Common myeloid progenitor, CD34-positive (primary cell): ENCODE measurements at regions of chr16 and their contacts with region 1.

Region 1: GRCh38 chr16:17578921-17579874 is 108.4 kb upstream of the XYLT1 start:
- DNase-seq: peak; percentile 80 to 87 (median 83)
- H3K4me3 ChIP-seq: peak overlapping the region in 3 of 7 experiments; percentile 5 to 42 (median 41)
- H3K27ac ChIP-seq: no peak overlapping the region
- H3K4me1 ChIP-seq: peaks cover 0 to 11% (median 3%) of the 10 kb centered on the region in 4 experiments
- H3K27me3 ChIP-seq: no peaks in the 10 kb centered on the region

Region 2: GRCh38 chr16:17556276-17557052 is 22.7 kb before region 1 on chr16:
- CTCF ChIA-PET with region 1: interaction called, 15 read pairs
- POLR2A ChIA-PET with region 1: no interaction called
- DNase-seq: peak; percentile 15 to 35 (median 31)
- H3K4me3 ChIP-seq: no peak overlapping the region
- H3K27ac ChIP-seq: no peak overlapping the region
- H3K4me1 ChIP-seq: no peaks in the 10 kb centered on the region
- H3K27me3 ChIP-seq: no peaks in the 10 kb centered on the region